Endothelial cell of umbilical vein (primary cell): ENCODE measurements at regions of chr17 and their contacts with region 1.

Region 1: DNA sequence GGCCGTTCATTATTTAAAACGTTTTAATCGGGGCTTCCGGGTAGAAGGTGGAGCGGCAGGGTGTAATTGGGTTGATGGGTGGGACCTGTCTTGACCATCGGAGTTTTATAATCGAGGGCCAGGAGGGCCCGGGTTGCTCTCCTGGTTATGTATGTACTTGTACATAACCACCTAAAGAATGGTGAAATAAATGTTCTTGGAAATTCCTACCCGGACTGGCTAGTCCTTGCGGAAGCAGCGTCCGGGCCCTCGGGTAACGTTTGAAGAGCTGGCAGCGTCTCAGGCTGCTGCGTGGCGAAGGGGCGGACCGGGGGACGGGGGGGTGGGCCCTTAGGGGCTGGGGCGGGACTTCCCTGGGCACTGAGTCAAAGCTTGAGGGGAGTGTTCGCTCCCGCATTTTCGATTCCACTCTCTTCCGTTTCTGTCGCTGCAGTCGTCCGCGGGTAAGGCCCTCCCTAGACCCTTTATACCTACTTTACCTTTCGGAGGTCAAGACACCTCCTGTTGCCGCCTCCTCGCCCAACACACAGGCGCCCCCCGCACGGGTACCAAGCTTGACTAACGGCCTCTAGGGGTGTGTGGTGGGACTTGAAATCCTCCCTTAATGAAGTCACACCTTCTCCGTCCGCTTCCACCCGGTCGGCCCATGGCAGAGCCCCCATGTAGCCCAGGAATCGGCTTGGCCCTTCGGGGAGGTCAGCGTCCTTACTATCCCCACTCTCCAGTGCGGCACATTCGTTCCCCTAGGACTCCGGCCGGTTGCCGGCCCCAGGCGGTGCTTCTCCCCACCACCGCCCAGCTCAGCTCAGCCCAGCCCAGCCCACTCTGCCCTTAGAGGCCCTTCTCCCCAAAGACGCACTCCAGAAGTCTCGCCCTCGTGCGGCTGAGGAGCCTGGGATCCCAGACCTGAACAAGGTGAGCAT is at the start of gene TMEM106A:
- DNase-seq: peak; percentile 87
- H3K4me3 ChIP-seq: peak within 1 kb of the TSS; percentile 72 to 79 (median 75)
- H3K27ac ChIP-seq: peak within 1 kb of the TSS; percentile 72
- H3K4me1 ChIP-seq: peaks cover 16% of the 10 kb centered on the region
- H3K27me3 ChIP-seq: no peaks in the 10 kb centered on the region
- CTCF ChIP-seq: peak in 1 of 2 donors; percentile 47
- POLR2A ChIP-seq: peak; percentile 96
- total RNA-seq, gene TMEM106A: 11.5 and 14.8 TPM in 2 replicates

Region 2: GRCh38 chr17:43224146-43224695 is 12.5 kb after region 1 on chr17:
- CTCF ChIA-PET with region 1: interaction called, 13 read pairs
- POLR2A ChIA-PET with region 1: interaction called, 4 read pairs
- dilution Hi-C with region 1: no loop called
- intact Hi-C with region 1: no loop called
- DNase-seq: no peak
- H3K4me3 ChIP-seq: no peak overlapping the region
- H3K27ac ChIP-seq: no peak overlapping the region
- H3K4me1 ChIP-seq: no peaks in the 10 kb centered on the region
- H3K27me3 ChIP-seq: no peaks in the 10 kb centered on the region
- CTCF ChIP-seq: no peak
- POLR2A ChIP-seq: no peak